Heart right ventricle (tissue), 16 donors: ENCODE measurements at regions of chr11 and their contacts with region 1.

Region 1: DNA sequence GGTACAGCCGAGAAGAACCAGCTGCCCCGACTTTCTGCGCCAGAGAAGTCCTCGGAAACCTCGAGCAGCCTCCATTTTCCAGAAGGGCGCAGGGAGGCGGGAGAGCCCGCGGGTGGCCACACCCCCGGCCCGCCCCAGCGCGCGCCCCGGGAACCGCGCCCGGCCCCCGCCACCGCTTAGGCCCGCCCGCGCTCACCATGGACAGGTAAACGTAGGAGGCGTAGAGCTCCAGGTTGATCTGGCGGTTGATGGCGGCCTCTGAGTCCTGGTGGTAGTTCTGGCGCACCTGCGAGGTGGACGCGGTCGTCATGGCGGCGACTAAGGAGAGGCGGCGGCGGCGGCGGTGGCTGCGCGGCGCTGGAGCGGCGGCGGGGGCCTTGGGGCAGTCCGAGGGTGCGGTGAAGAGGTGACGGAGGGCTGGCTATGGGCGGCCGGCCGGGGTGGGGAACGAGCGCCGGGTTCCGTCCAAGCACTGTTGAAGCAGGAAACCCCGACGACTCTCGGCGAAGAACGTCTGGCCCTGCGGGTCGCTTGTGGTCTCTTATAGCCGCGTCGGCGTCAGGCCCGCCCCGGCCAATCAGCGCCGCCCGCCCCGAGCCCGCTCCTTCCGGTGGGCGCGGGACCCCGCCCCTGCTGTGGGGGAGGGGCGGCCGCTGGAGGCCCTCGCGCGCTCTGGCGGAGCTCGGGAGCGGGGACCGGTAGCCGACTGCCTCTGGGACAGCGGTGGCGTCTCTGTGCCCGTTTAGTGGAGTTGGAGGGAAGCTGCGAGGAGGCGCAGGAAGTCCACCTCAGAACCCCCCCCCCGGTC is at the start of gene FTH1:
- DNase-seq: peak; percentile 92 to 93
- ATAC-seq: peak; percentile 74 to 89 (median 83)
- H3K4me3 ChIP-seq: peak within 1 kb of the TSS; percentile 74 to 97 (median 90)
- H3K27ac ChIP-seq: peak within 1 kb of the TSS; percentile 96 to 100 (median 99)
- H3K4me1 ChIP-seq: peaks cover 23 to 85% (median 76%) of the 10 kb centered on the region in 9 donors
- H3K27me3 ChIP-seq: no peaks in the 10 kb centered on the region
- CTCF ChIP-seq: peak in 1 of 9 donors; percentile 6
- total RNA-seq, gene FTH1: 2,008 to 4,360 (median 2,962) TPM

Region 2: GRCh38 chr11:61152816-61153592 is 814.3 kb before region 1 on chr11:
- intact Hi-C with region 1: loop called in 1 of 10 experiments (anchors 10 kb)
- DNase-seq: no peak
- ATAC-seq: peak in 2 of 8 donors; percentile 49 to 73
- H3K4me3 ChIP-seq: no peak overlapping the region
- H3K27ac ChIP-seq: peak overlapping the region in 7 of 10 donors; percentile 18 to 77 (median 58)
- H3K4me1 ChIP-seq: peaks cover 0 to 65% (median 48%) of the 10 kb centered on the region in 9 donors
- H3K27me3 ChIP-seq: no peaks in the 10 kb centered on the region
- CTCF ChIP-seq: no peak

Region 3: GRCh38 chr11:61816736-61817455 is 150.4 kb before region 1 on chr11 and contains the start of gene FADS1:
- intact Hi-C with region 1: loop called in 1 of 10 experiments (anchors 5 kb)
- DNase-seq: peak; percentile 89 to 93
- ATAC-seq: peak; percentile 16 to 74 (median 44)
- H3K4me3 ChIP-seq: peak within 1 kb of the TSS; percentile 50 to 93 (median 76)
- H3K27ac ChIP-seq: peak within 1 kb of the TSS; percentile 93 to 100 (median 99)
- H3K4me1 ChIP-seq: peaks cover 4 to 29% (median 10%) of the 10 kb centered on the region in 9 donors
- H3K27me3 ChIP-seq: peaks cover 0 to 9% (median 0%) of the 10 kb centered on the region in 7 donors
- CTCF ChIP-seq: peak; percentile 14 to 75 (median 55)
- total RNA-seq, gene FADS1: 16.4 to 37.4 (median 25.4) TPM

Region 4: DNA sequence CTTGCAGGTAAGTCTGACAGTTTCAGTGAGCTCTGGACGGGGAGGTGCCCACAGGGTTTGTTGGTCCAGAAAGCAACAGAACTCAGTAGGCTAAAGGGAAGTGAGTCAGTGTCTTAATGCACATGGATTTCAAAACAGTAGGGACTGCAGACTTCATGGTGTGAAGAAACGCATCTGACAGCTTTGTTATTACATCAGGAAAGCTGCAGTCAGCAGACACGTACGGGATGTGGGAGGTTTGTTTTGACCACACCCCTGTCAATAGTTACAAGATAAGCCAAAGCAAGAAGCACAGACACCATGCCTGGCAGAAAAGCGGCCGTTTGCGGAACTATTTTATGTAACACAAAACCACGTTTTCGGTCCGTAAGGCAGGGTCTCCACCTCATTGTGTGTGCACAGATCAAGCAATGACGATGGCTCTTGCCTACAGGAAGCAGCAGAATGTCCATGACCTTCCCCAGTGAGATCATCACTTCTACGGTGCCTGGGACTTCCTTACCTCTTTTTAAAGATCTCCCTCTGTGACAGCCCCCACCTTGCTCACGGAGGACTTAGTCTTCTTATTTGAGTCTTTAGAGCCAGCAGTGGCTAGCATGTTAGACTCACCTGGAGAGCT is 58.3 kb after region 1 on chr11:
- intact Hi-C with region 1: loop called in 6 of 10 experiments (anchors 2 to 10 kb)
- DNase-seq: peak; percentile 34 to 76
- ATAC-seq: peak; percentile 82 to 97 (median 94)
- H3K4me3 ChIP-seq: peak overlapping the region in 6 of 10 donors; percentile 3 to 31 (median 16)
- H3K27ac ChIP-seq: peak overlapping the region in 9 of 10 donors; percentile 41 to 92 (median 70)
- H3K4me1 ChIP-seq: peaks cover 0 to 32% (median 8%) of the 10 kb centered on the region in 9 donors
- H3K27me3 ChIP-seq: no peaks in the 10 kb centered on the region
- CTCF ChIP-seq: no peak

Region 5: DNA sequence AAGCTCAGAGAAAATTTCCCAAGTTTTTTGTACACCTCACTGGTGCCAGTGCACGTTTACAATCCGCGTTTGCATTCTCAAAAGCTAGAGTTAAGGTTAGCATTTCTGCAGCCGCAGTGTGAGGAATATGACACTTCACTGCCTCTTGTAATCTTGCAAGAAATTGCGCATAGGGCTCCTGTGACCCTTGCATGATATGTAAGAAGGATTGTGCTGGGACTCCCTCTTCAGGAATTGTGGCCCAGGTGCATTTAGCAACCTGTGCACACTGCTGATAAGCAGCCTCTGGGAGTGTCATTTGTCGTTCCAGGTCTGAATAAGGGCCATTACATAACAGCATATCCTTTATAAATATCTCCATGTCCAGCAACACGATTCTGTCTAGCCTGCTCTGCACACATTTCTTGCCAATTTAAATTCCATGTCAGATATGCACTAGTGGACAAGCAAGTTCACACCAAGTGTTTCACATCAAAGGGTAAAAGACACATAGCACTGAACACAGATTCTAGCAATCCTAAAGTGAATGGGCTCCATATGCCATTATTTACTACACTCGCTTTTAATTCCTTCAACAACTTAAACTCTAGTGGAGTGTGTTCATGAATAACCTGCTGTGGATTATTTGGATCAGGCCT is 87.3 kb after region 1 on chr11:
- intact Hi-C with region 1: loop called in 1 of 10 experiments (anchors 10 kb)
- DNase-seq: no peak
- ATAC-seq: no peak
- H3K4me3 ChIP-seq: no peak overlapping the region
- H3K27ac ChIP-seq: no peak overlapping the region
- H3K4me1 ChIP-seq: peaks cover 0 to 16% (median 0%) of the 10 kb centered on the region in 9 donors
- H3K27me3 ChIP-seq: no peaks in the 10 kb centered on the region
- CTCF ChIP-seq: peak in 7 of 9 donors; percentile 19 to 45 (median 40)

Region 6: GRCh38 chr11:62081378-62082291 is 114.3 kb after region 1 on chr11:
- intact Hi-C with region 1: loop called in 1 of 10 experiments (anchors 5 kb)
- DNase-seq: peak; percentile 74 to 79
- ATAC-seq: peak; percentile 59 to 92 (median 86)
- H3K4me3 ChIP-seq: no peak overlapping the region
- H3K27ac ChIP-seq: peak overlapping the region in 1 of 10 donors; percentile 16
- H3K4me1 ChIP-seq: peaks cover 0 to 15% (median 0%) of the 10 kb centered on the region in 9 donors
- H3K27me3 ChIP-seq: no peaks in the 10 kb centered on the region
- CTCF ChIP-seq: peak; percentile 86 to 98 (median 94)